PC-3 (cell line): ENCODE measurements at regions of chr13 and their contacts with region 1.

Region 1: DNA sequence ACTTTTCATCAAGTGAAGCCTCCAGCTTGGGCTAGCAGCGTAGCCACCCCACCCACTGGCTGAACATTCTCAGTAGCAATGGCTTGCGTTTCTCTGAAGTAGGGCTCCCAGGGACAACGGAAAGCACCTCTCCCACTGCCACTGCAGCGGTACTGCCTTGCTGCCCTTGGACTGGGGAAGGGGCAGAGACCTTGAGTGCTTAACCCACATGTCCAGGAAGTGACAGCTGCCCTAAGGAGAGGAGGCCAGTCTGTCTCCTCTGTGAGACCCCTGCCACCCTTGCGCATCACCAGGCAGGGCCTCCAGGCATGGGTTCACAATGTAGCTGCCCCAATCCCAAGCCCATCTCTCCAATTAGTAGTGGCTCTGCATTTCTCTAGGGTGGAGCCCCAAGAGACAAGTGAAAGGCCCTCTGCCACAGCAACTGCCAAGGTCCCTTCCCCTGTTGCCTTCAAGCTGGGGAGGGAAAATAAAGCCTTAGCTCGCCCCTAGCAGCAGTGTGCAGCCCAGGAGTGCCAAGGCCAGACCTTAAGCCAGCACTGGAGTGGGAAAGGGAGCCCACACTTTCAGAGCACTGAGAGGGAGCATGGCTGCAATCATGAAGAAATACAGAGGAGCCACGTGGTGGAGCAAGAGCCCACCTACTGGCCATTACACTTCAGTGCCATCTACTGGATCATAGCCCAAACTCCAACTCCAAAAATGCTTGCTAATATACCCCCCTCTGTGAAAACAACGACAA is 175.9 kb upstream of the TRPC4 start:
- DNase-seq: peak; percentile 51
- ATAC-seq: peak; percentile 71
- H3K4me3 ChIP-seq: no peak overlapping the region
- H3K27ac ChIP-seq: no peak overlapping the region
- H3K4me1 ChIP-seq: no peaks in the 10 kb centered on the region
- H3K27me3 ChIP-seq: no peaks in the 10 kb centered on the region
- CTCF ChIP-seq: peak; percentile 69

Region 2: DNA sequence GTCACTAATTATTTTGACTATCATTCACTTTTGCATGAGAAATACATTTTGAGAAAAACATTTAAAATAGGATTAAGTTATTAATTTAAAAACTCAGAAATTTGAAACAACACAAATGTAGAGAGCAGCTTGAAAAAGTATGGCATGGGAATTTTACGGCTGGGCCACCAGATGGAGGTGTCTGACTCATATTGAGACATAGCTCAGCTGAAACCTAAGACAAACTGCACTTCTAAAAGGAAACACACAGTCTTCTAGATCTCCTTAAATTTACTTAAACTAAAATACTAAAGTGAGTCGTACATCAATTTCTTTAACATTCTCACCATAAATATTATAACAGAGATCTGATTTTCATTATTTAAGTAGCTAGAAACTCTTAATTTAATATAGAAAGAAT is 405.0 kb before region 1 on chr13:
- CTCF ChIA-PET with region 1: no interaction called
- POLR2A ChIA-PET with region 1: no interaction called
- intact Hi-C with region 1: loop called (anchors 2 kb)
- DNase-seq: peak; percentile 58
- ATAC-seq: peak; percentile 80
- H3K4me3 ChIP-seq: no peak overlapping the region
- H3K27ac ChIP-seq: no peak overlapping the region
- H3K4me1 ChIP-seq: no peaks in the 10 kb centered on the region
- H3K27me3 ChIP-seq: peaks cover 18% of the 10 kb centered on the region
- CTCF ChIP-seq: peak; percentile 72

Region 3: GRCh38 chr13:37769078-37769477 is 276.4 kb before region 1 on chr13:
- CTCF ChIA-PET with region 1: no interaction called
- POLR2A ChIA-PET with region 1: no interaction called
- intact Hi-C with region 1: loop called (anchors 5 kb)
- DNase-seq: peak; percentile 21
- ATAC-seq: no peak
- H3K4me3 ChIP-seq: no peak overlapping the region
- H3K27ac ChIP-seq: no peak overlapping the region
- H3K4me1 ChIP-seq: no peaks in the 10 kb centered on the region
- H3K27me3 ChIP-seq: peaks cover 25% of the 10 kb centered on the region; the same call in 1 of the 2 replicates
- CTCF ChIP-seq: peak; percentile 37

Region 4: GRCh38 chr13:37869756-37870488 is 175.6 kb before region 1 on chr13 and contains the start of gene TRPC4:
- CTCF ChIA-PET with region 1: interaction called, 4 read pairs
- POLR2A ChIA-PET with region 1: no interaction called
- intact Hi-C with region 1: loop called (anchors 1 kb)
- DNase-seq: peak; percentile 54
- ATAC-seq: peak; percentile 83
- H3K4me3 ChIP-seq: peak within 1 kb of the TSS; percentile 62
- H3K27ac ChIP-seq: no peak within 1 kb of the TSS
- H3K4me1 ChIP-seq: peaks cover 15% of the 10 kb centered on the region
- H3K27me3 ChIP-seq: peaks cover 72% of the 10 kb centered on the region
- CTCF ChIP-seq: peak; percentile 60
- total RNA-seq, gene TRPC4: 0.22 TPM in 1 of 2 replicates, not detected in the other